Psoas muscle (tissue), 8 donors: ENCODE measurements at regions of chr10 and their contacts with region 1.

Region 1: GRCh38 chr10:92103376-92104090 is 180.0 kb downstream of the BTAF1 start:
- DNase-seq: no peak
- ATAC-seq: no peak
- H3K4me3 ChIP-seq: no peak overlapping the region
- H3K27ac ChIP-seq: peak overlapping the region; percentile 85
- H3K4me1 ChIP-seq: peaks cover 52% of the 10 kb centered on the region
- H3K27me3 ChIP-seq: no peaks in the 10 kb centered on the region
- CTCF ChIP-seq: no peak

Region 2: GRCh38 chr10:92156874-92157773 is 53.6 kb after region 1 on chr10:
- intact Hi-C with region 1: loop called in 1 of 2 experiments (anchors 10 kb)
- DNase-seq: no peak
- ATAC-seq: no peak
- H3K4me3 ChIP-seq: no peak overlapping the region
- H3K27ac ChIP-seq: peak overlapping the region; percentile 17
- H3K4me1 ChIP-seq: peaks cover 14% of the 10 kb centered on the region
- H3K27me3 ChIP-seq: no peaks in the 10 kb centered on the region
- CTCF ChIP-seq: no peak

Region 3: GRCh38 chr10:92240289-92241157 is 137.0 kb after region 1 on chr10:
- intact Hi-C with region 1: loop called in 1 of 2 experiments (anchors 5 kb)
- DNase-seq: peak; percentile 26 to 54
- ATAC-seq: peak; percentile 48 to 75 (median 65)
- H3K4me3 ChIP-seq: peak overlapping the region; percentile 79
- H3K27ac ChIP-seq: peak overlapping the region; percentile 92
- H3K4me1 ChIP-seq: peaks cover 42% of the 10 kb centered on the region
- H3K27me3 ChIP-seq: no peaks in the 10 kb centered on the region
- CTCF ChIP-seq: no peak